Adrenal gland (tissue), 19 donors: ENCODE measurements at regions of chr6 and their contacts with region 1.

Region 1: DNA sequence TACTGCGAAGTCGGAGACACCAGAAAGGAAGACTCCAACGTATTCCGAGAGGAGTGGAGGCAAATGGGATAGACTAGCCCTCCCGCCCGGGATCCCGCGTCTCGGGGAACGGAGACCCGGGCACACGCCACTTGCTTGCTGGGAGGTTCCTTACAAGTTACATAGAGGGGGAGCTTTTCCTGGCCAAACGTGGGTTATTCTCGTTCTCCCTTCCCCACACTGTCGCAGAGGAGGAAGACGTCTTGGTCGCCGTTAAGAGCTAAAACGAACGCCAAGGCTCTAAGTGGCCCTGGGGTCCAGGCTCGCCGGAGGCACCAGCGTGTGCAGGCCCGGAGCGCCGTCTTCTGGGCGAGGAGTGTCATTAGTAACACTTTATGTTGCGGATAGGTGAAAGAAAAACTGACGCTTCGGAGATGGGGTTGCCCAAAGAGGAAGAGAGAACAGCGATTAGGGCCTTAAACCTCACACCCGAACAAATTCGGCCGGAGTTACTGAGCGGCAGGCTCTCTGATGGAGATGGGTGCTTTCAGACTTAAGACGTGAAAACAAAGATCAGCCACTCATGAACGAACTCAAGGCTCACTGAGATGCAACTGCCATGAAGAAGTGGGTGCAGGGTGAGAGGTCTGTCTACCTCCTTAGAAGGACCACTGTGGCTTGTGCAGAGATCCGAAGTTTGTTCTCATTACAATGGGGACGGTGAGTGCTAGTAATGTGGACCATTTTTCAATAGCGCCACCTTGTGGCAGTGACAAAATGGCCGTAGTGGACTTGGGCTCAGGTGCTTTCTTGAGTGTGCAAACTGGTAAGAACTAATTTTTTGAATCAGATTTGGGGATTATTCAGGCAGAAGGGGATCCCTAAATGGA is 11.7 kb upstream of the ZNF311 start:
- DNase-seq: peak; percentile 56 to 92 (median 80)
- H3K4me3 ChIP-seq: peak overlapping the region in 2 of 4 donors; percentile 17 to 52
- H3K27ac ChIP-seq: no peak overlapping the region
- H3K4me1 ChIP-seq: no peaks in the 10 kb centered on the region
- H3K27me3 ChIP-seq: peaks cover 19% of the 10 kb centered on the region
- CTCF ChIP-seq: peak; percentile 75 to 86 (median 80)
- POLR2A ChIP-seq: no peak

Region 2: DNA sequence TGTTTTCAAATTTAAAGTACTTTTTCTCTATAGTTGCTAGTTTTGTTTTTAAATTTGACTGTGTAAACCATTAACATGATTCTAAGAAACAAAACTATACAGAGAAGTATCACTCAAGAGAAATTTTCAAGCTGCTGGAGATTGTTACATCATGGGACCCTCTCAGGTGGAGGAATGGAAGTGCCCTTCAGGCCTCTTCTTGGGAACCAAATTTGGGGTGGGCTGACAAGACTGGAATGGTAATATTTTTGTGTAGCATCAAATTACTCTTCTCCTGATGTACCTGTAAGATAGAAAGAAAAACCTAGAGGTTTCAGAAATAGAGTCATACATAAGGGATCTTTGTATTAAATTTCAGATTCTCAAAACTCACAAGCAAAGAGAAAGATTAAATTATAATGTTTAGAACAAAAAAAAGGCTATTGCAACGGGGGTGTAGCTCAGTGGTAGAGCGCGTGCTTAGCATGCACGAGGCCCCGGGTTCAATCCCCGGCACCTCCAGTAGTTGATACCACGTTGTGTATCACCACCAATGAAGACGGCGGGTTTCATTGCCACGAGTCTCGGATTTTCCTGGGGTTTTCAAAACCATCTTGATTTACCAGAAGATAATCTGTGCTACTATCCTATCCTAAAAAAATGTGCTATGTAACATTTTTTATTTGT is 297.4 kb before region 1 on chr6:
- intact Hi-C with region 1: no loop called
- DNase-seq: no peak
- H3K4me3 ChIP-seq: no peak overlapping the region
- H3K27ac ChIP-seq: no peak overlapping the region
- H3K4me1 ChIP-seq: no peaks in the 10 kb centered on the region
- H3K27me3 ChIP-seq: peaks cover 10% of the 10 kb centered on the region
- CTCF ChIP-seq: no peak
- POLR2A ChIP-seq: no peak

Region 3: DNA sequence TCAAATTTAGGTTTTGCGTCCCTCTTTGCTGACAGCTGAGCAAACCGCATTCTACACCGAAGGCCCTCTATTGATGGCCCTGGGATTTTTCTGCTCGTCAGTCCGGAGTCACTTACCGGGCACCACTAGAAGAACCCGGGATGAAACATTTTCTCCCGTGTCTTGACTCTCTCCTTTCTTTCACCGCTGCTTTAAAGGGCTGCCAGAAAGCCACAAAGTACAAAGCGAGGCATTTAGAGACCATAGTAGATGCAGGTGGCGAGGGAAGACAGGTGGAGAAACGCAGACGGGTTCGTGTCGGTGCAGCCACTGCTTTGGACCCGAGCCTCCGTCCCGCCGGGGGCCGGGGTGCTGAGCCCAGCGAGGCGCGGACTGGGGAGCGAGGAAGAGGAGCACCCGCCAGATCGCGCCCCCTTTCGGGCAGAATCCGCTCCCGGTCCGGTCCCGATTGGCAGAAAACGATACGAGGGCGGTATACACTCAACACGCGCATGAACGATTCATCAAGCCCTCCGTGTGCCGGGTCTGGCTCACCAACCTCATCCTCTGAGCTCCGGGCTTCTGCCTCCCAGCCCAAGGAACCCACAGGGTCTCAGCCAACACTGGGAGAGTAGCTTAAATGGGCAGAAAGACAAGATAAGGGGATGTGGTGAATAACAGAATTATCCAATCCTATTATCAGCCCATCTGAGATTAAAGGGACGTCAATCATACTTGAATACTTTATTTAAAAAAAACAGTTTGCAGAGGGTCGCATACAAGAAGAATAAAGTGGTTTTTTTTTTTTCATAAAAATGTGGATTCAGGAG is 178.0 kb before region 1 on chr6:
- intact Hi-C with region 1: loop called (anchors 5 to 10 kb)
- DNase-seq: peak; percentile 77 to 86 (median 85)
- H3K4me3 ChIP-seq: peak overlapping the region in 3 of 4 donors; percentile 50 to 59 (median 52)
- H3K27ac ChIP-seq: peak overlapping the region in 3 of 5 donors; percentile 59 to 76 (median 70)
- H3K4me1 ChIP-seq: peaks cover 0 to 12% of the 10 kb centered on the region in 2 donors
- H3K27me3 ChIP-seq: peaks cover 2% of the 10 kb centered on the region
- CTCF ChIP-seq: peak; percentile 27 to 59 (median 52)
- POLR2A ChIP-seq: no peak